ENCODE measurements at regions of chr9 and their contacts with region 1.

Region 1: GRCh38 chr9:81588148-81588871 is 101.0 kb downstream of the TLE1 start:
- DNase-seq: peak; percentile 82
- ATAC-seq: peak; percentile 92
- H3K4me3 ChIP-seq: peak overlapping the region; percentile 48; the same call in 1 of the 2 replicates
- H3K27ac ChIP-seq: peak overlapping the region; percentile 91
- H3K4me1 ChIP-seq: peaks cover 29% of the 10 kb centered on the region
- H3K27me3 ChIP-seq: no peaks in the 10 kb centered on the region
- CTCF ChIP-seq: no peak

Region 2: GRCh38 chr9:81529556-81530195 is 58.6 kb before region 1 on chr9:
- CTCF ChIA-PET with region 1: no interaction called
- POLR2A ChIA-PET with region 1: no interaction called
- intact Hi-C with region 1: loop called (anchors 10 kb)
- DNase-seq: peak; percentile 77
- ATAC-seq: peak; percentile 84
- H3K4me3 ChIP-seq: no peak overlapping the region
- H3K27ac ChIP-seq: peak overlapping the region; percentile 68
- H3K4me1 ChIP-seq: peaks cover 29% of the 10 kb centered on the region
- H3K27me3 ChIP-seq: no peaks in the 10 kb centered on the region
- CTCF ChIP-seq: no peak

Region 3: GRCh38 chr9:81628897-81629296 is 40.6 kb after region 1 on chr9:
- CTCF ChIA-PET with region 1: no interaction called
- POLR2A ChIA-PET with region 1: no interaction called
- intact Hi-C with region 1: loop called (anchors 1 kb)
- DNase-seq: peak; percentile 93
- ATAC-seq: peak; percentile 86
- H3K4me3 ChIP-seq: peak overlapping the region; percentile 9; the same call in 1 of the 2 replicates
- H3K27ac ChIP-seq: peak overlapping the region; percentile 91
- H3K4me1 ChIP-seq: peaks cover 56% of the 10 kb centered on the region
- H3K27me3 ChIP-seq: no peaks in the 10 kb centered on the region
- CTCF ChIP-seq: no peak